MCF 10A (cell line): ENCODE measurements at regions of chr5 and their contacts with region 1.

Region 1: GRCh38 chr5:148730943-148731861 is 76.9 kb upstream of the HTR4 start:
- DNase-seq: peak; percentile 95
- H3K4me3 Mint-ChIP-seq: no peak overlapping the region
- H3K27ac Mint-ChIP-seq: peak overlapping the region; percentile 62
- H3K4me1 Mint-ChIP-seq: peaks cover 52% of the 10 kb centered on the region
- H3K27me3 Mint-ChIP-seq: no peaks in the 10 kb centered on the region
- CTCF ChIP-seq: peak; percentile 99

Region 2: DNA sequence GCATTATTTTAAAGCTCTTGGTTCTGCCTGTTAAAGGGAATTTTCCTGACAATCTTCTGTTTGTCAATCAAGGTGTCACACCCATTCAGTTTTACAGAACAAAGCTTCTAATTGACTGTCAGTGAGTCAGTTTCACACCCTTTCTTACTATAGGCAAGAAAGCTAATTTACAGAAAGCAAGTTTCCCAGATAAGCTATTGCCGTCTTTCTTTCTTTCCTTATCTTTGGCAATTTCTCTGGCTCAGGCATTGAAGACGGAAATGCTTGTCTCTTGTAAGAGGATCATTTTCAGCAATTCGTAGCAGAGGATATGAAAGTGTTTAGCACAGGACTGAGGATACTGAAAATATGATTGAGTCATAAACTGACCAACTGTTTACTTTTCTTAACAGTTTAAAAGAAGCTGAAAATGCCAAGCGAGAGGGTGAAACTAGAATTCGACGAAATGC is 640.4 kb before region 1 on chr5:
- CTCF ChIA-PET with region 1: no interaction called
- POLR2A ChIA-PET with region 1: no interaction called
- intact Hi-C with region 1: no loop called
- DNase-seq: peak; percentile 67
- H3K4me3 Mint-ChIP-seq: peak overlapping the region; percentile 63
- H3K27ac Mint-ChIP-seq: peak overlapping the region; percentile 93
- H3K4me1 Mint-ChIP-seq: peaks cover 14% of the 10 kb centered on the region
- H3K27me3 Mint-ChIP-seq: no peaks in the 10 kb centered on the region
- CTCF ChIP-seq: no peak

Region 3: DNA sequence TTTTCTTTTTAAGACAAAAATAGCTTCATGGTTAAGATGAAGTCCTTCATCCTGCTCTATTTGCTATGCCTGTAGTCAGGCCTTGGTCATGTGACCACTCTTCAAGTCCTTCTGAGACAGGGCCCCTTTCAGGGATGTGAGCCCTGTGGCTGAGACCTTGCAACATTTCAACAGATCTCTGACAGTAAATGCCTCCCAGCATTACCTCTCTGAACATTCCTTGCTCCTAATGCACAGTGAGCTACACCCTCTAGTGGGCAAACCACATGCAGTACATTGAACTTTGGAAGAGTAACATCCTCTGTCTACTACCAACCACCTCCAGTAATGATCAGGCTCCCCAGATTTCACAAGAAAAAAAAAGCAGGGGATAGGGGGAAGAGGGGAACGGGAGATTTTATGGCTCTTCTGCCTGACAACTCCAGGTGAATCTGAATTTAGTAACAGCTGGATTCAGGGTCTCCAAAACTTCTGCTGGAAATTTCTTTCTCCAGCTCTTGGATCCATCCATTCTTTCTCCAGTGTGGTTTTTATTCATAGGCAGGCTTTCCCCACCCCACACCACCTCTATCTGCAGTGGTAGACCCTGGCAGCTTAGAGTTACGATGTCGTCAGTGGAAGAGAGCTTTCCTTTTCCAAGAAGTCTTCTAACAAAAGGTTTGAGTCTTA is 356.4 kb before region 1 on chr5:
- CTCF ChIA-PET with region 1: interaction called, 16 read pairs
- POLR2A ChIA-PET with region 1: no interaction called
- intact Hi-C with region 1: loop called (anchors 2 kb)
- DNase-seq: peak; percentile 86
- H3K4me3 Mint-ChIP-seq: no peak overlapping the region
- H3K27ac Mint-ChIP-seq: no peak overlapping the region
- H3K4me1 Mint-ChIP-seq: peaks cover 7% of the 10 kb centered on the region
- H3K27me3 Mint-ChIP-seq: no peaks in the 10 kb centered on the region
- CTCF ChIP-seq: peak; percentile 94

Region 4: GRCh38 chr5:148437249-148437648 is 294.0 kb before region 1 on chr5:
- CTCF ChIA-PET with region 1: interaction called, 924 read pairs
- POLR2A ChIA-PET with region 1: interaction called, 80 read pairs
- intact Hi-C with region 1: no loop called
- DNase-seq: no peak
- H3K4me3 Mint-ChIP-seq: no peak overlapping the region
- H3K27ac Mint-ChIP-seq: no peak overlapping the region
- H3K4me1 Mint-ChIP-seq: no peaks in the 10 kb centered on the region
- H3K27me3 Mint-ChIP-seq: no peaks in the 10 kb centered on the region
- CTCF ChIP-seq: no peak

Region 5: DNA sequence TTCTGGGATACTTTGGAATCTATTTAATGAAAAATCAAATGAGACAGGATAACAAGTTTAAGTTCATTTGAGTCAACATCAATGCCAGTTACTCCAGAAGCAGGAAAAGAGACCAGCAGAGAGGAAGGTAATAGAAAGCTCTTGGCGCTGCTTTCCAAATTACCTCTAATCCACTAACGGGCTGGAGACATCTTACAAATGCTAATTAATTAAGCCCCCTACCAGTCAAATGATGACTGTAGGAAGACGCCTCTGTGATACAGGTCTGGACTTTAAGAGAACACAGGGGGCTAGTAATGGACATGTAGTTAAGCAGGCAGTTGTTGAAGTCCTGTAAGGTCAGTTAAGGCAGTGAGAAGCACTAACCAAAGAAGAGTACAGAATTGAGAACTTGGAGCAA is 11.6 kb before region 1 on chr5:
- CTCF ChIA-PET with region 1: interaction called, 36 read pairs
- POLR2A ChIA-PET with region 1: interaction called, 5 read pairs
- intact Hi-C with region 1: no loop called
- DNase-seq: no peak
- H3K4me3 Mint-ChIP-seq: no peak overlapping the region
- H3K27ac Mint-ChIP-seq: no peak overlapping the region
- H3K4me1 Mint-ChIP-seq: peaks cover 5% of the 10 kb centered on the region
- H3K27me3 Mint-ChIP-seq: peaks cover 35% of the 10 kb centered on the region
- CTCF ChIP-seq: no peak

Region 6: DNA sequence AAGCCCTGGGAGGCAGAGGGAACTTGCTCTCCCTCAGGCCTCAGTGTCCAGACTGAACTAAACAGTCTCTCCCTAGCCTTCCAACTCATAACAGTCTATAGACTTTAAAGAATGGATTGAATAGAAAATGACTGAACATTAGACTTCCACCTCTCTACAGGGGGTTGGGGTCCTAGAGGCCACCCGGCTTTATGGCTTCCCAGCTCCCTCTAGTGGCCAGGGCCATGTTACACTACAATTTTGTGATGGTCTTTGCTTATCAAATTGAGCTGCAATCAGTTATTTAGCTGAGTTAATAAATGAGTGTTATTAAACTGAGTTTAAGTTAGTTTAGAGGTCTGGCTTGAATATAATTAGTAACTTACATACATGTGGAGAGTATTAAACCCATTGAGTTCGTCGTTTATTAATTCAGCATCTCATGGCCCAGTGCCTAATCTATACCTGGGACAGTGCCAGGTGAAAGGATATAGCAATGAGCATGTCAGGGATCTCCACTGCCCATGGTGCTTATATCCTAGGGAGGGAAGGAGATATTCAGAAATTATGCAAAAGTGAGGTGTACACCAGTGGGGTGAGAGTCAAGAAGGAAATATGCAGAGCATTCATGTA is 226.5 kb after region 1 on chr5:
- CTCF ChIA-PET with region 1: interaction called, 71 read pairs
- POLR2A ChIA-PET with region 1: no interaction called
- intact Hi-C with region 1: loop called (anchors 2 kb)
- DNase-seq: peak; percentile 71
- H3K4me3 Mint-ChIP-seq: no peak overlapping the region
- H3K27ac Mint-ChIP-seq: no peak overlapping the region
- H3K4me1 Mint-ChIP-seq: peaks cover 24% of the 10 kb centered on the region
- H3K27me3 Mint-ChIP-seq: no peaks in the 10 kb centered on the region
- CTCF ChIP-seq: peak; percentile 99

Region 7: DNA sequence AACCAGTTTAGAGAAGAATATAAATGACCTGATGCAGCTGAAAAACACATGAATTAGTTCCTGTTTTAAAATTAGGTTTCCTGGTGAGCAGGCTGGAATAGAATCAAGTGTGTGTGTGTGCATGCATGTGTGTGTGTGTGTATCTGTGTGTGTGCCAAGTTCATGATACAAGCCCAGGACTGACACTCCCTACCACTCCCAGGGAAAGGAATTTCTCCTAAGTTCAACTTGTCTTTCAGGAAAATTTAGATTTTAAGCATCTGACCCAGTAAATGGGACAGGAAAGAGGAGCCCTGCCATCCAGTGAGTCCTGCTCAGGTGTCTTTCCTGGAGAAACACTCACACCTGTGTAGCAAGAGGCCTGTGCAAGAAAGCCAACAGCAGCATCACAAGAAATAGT is 342.9 kb after region 1 on chr5:
- CTCF ChIA-PET with region 1: interaction called, 13 read pairs
- POLR2A ChIA-PET with region 1: no interaction called
- intact Hi-C with region 1: no loop called
- DNase-seq: no peak
- H3K4me3 Mint-ChIP-seq: no peak overlapping the region
- H3K27ac Mint-ChIP-seq: peak overlapping the region; percentile 53
- H3K4me1 Mint-ChIP-seq: peaks cover 32% of the 10 kb centered on the region
- H3K27me3 Mint-ChIP-seq: no peaks in the 10 kb centered on the region
- CTCF ChIP-seq: no peak

Region 8: DNA sequence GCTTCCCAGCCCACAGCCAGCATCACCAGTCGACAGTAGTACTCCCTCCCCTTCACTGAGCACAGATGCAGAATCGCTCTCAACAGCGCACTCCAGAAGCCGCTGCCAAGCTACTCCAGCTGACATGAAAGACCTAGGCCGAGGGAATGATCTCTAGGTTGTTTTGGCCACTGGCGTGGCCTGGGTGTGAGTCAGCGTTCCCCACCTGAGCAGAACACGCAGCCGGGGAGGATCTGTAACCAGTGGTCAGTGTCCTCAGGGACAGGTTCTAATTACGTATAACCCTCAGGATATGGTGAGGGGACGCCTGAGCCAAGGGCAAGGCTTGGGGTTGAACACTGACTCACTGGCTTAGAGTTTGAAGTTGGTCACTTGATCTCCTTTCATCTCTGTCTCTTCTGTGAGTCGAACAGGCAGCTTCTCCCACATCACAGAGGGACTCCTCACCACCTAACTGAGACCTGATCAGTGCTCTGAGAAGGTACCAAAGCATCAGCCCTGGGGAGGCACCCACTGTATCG is 724.7 kb after region 1 on chr5:
- CTCF ChIA-PET with region 1: no interaction called
- POLR2A ChIA-PET with region 1: no interaction called
- intact Hi-C with region 1: no loop called
- DNase-seq: peak; percentile 70
- H3K4me3 Mint-ChIP-seq: no peak overlapping the region
- H3K27ac Mint-ChIP-seq: peak overlapping the region; percentile 9
- H3K4me1 Mint-ChIP-seq: peaks cover 13% of the 10 kb centered on the region
- H3K27me3 Mint-ChIP-seq: no peaks in the 10 kb centered on the region
- CTCF ChIP-seq: no peak